ENCODE measurements at regions of chr7 and their contacts with region 1.

Region 1: GRCh38 chr7:99374103-99375064 is at the start of gene ARPC1B:
- DNase-seq: peak; percentile 92
- H3K27ac ChIP-seq: peak within 1 kb of the TSS; percentile 97
- CTCF ChIP-seq: no peak

Region 2: DNA sequence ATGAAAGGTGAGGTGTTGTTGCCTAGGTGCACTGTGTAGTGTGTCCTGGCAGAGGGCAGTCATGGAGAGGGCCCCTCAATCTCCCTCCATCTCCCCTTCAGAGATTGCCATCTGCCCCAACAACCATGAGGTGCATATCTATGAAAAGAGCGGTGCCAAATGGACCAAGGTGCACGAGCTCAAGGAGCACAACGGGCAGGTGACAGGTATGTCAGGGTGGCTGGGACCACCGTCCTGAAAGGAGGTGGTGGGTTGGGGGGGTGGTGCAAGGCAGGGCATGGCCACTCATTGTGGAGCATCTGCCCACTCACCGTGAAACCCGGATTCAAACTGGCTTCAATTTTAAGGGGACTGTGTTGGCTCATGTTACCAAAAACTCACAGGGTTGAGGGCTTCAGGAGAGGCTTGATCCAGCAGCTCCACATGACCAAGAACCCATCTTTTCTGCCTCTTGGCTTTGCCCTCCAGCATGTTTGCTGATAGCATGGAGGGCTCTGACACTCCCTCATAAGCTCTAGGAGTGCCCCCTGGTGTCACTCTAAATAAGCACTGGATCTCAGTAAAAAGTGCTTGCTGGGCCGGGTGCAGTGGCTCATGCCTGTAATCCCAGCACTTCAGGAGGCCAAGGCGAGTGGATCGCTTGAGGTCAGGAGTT is 12.3 kb after region 1 on chr7:
- CTCF ChIA-PET with region 1: no interaction called
- POLR2A ChIA-PET with region 1: interaction called, 10 read pairs
- DNase-seq: no peak
- H3K27ac ChIP-seq: peak overlapping the region; percentile 29
- CTCF ChIP-seq: no peak

Measured in RWPE1 (cell line).